Psoas muscle (tissue), 8 donors: ENCODE measurements at regions of chr9 and their contacts with region 1.

Region 1: GRCh38 chr9:122302237-122303093 is 37.8 kb downstream of the MRRF start:
- DNase-seq: no peak
- ATAC-seq: no peak
- H3K4me3 ChIP-seq: no peak overlapping the region
- H3K27ac ChIP-seq: no peak overlapping the region
- H3K4me1 ChIP-seq: peaks cover 4% of the 10 kb centered on the region
- H3K27me3 ChIP-seq: no peaks in the 10 kb centered on the region
- CTCF ChIP-seq: no peak

Region 2: GRCh38 chr9:122286764-122287163 is 15.7 kb before region 1 on chr9:
- intact Hi-C with region 1: loop called in 1 of 2 experiments (anchors 1 kb)
- DNase-seq: no peak
- ATAC-seq: no peak
- H3K4me3 ChIP-seq: no peak overlapping the region
- H3K27ac ChIP-seq: no peak overlapping the region
- H3K4me1 ChIP-seq: no peaks in the 10 kb centered on the region
- H3K27me3 ChIP-seq: no peaks in the 10 kb centered on the region
- CTCF ChIP-seq: no peak

Region 3: GRCh38 chr9:122370869-122371755 is 68.6 kb after region 1 on chr9 and contains the start of gene PTGS1:
- intact Hi-C with region 1: no loop called
- DNase-seq: peak; percentile 50 to 70
- ATAC-seq: peak in 3 of 4 donors; percentile 46 to 66 (median 54)
- H3K4me3 ChIP-seq: peak within 1 kb of the TSS; percentile 56
- H3K27ac ChIP-seq: no peak within 1 kb of the TSS
- H3K4me1 ChIP-seq: peaks cover 5% of the 10 kb centered on the region
- H3K27me3 ChIP-seq: peaks cover 0 to 5% (median 0%) of the 10 kb centered on the region in 3 donors
- CTCF ChIP-seq: no peak
- total RNA-seq, gene PTGS1: 0.78 to 3.8 (median 1.8) TPM